BJ (cell line): ENCODE measurements at regions of chr17 and their contacts with region 1.

Region 1: DNA sequence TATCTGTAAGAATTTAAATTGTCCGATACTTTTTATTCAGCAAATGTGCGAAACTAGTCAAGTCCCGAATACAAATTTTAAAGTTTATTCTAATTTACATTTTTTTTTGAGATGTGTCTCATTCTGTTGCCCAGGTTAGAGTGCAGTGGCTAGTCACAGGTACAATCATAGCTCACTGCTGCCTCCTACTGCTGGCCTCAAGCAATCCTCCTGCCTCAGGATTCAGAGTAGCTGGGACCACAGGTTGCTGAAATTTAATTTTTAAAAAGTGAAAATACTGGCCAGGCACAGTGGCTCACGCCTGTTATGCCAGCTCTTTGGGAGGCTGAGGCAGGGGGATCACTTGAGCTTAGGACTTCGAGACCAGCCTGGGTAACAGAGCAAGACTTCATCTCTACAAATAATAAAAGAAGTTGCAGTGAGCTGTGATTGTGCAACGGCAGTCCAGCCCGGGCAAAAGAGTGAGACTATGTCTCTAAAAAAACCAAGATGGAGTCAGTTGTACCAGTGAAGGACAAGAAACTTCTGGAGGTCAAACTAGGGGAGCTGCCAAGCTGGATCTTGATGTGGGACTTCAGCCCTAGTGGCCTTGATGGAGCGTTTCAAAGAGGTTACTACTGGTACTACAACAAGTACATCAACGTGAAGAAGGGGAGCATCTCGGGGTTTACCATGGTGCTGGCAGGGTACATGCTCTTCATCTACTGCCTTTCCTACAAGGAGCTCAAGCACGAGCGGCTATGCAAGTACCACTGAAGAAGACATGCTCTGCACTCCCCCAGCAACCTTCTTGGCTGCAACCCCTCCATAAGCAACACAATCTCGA is 5.6 kb downstream of the POLG2 start:
- DNase-seq: no peak
- H3K4me3 ChIP-seq: no peak overlapping the region
- H3K27me3 ChIP-seq: no peaks in the 10 kb centered on the region
- CTCF ChIP-seq: peak; percentile 76

Region 2: GRCh38 chr17:64306850-64307463 is 184.3 kb before region 1 on chr17:
- CTCF ChIA-PET with region 1: interaction called, 16 read pairs
- POLR2A ChIA-PET with region 1: no interaction called
- DNase-seq: no peak
- H3K4me3 ChIP-seq: no peak overlapping the region
- H3K27me3 ChIP-seq: 0 out of 2 replicates have a peak, but pooled peaks cover 1% of the 10 kb centered on the region
- CTCF ChIP-seq: peak; percentile 83

Region 3: DNA sequence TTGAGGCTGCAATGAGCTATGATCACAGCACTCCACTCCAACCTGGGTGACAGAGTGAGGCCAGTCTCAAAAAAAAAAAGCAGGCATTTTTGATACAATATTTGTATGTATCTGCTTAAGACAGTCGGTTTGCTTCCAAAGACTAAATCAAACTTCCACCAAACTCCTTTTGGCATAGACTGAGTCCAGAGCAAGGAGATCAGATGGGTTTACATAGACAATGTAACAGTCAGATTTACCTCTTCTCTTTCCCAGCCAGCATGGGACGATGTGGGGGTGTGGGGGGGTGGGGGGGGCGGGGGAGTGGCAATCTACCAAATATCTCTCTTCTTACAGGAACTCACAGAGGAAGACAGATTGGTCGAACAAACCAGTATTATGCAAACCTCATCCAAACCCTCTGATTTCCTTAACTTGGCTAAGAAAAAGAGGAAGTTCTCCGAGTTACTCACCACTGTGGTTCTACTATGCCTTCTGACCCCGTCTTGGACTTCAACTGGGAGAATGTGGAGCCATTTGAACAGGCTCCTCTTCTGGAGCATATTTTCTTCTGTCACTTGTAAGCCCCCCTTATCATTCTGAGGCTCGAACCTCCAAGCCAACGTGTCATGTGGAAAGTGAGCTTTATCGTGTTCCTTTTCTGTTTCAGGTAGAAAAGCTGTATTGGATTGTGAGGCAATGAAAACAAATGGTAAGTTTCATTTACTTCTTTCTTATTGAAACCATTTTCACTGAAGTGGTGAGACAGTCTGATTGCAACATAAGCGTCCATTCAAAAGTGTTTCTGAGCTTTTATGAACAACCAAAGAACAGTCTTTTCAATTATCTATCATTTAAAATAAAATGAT is 42.4 kb before region 1 on chr17 and contains the start of gene MILR1:
- CTCF ChIA-PET with region 1: no interaction called
- POLR2A ChIA-PET with region 1: no interaction called
- DNase-seq: peak; percentile 23
- H3K4me3 ChIP-seq: no peak within 1 kb of the TSS
- H3K27me3 ChIP-seq: no peaks in the 10 kb centered on the region
- CTCF ChIP-seq: no peak
- polyA plus RNA-seq, gene MILR1: 0.75 and 1.8 TPM in 2 replicates

Region 4: DNA sequence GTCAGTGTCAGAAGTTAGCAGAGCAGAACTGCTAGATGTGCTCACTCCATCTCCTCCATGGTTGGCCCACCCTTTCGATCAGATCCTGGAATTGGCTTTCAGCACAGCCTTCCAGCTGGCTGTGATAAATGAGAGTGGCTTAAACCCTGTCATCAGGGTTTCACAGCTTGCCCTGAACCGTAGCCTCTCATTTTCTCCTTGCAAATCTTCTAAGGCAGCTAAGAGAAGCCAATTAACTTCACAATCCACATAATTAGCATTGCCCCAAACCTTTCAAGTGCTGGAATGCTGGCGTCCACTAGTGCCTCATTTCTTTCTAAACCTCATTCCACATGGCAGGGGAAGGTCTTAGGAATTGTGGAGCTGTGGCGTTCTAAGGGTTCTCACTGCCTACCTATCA is 20.6 kb before region 1 on chr17:
- CTCF ChIA-PET with region 1: interaction called, 13 read pairs
- POLR2A ChIA-PET with region 1: no interaction called
- DNase-seq: no peak
- H3K4me3 ChIP-seq: no peak overlapping the region
- H3K27me3 ChIP-seq: no peaks in the 10 kb centered on the region
- CTCF ChIP-seq: no peak

Region 5: DNA sequence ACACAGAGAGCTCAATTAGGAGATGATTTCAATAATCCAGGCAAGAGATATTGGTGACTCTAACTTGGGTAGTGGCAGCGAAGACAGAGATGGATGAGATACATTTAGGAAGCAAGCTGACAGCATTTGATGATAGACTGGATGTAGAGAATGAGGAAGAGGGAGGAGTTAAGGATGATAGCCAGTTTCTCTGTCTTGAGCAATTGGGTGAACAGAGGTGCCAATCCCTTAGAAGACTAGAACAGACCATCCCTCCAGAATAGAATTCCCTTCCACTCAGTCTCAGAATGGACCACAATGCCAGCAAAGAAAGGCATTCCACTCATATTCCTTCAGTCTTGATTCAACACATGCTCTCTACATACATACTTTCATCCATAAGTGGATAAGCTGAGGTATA is 11.6 kb before region 1 on chr17:
- CTCF ChIA-PET with region 1: interaction called, 19 read pairs
- POLR2A ChIA-PET with region 1: no interaction called
- DNase-seq: no peak
- H3K4me3 ChIP-seq: no peak overlapping the region
- H3K27me3 ChIP-seq: no peaks in the 10 kb centered on the region
- CTCF ChIP-seq: no peak

Region 6: GRCh38 chr17:64506576-64507477 is 15.6 kb after region 1 on chr17 and contains the start of gene CEP95:
- CTCF ChIA-PET with region 1: interaction called, 33 read pairs
- POLR2A ChIA-PET with region 1: interaction called, 5 read pairs
- DNase-seq: peak; percentile 80
- H3K4me3 ChIP-seq: peak within 1 kb of the TSS; percentile 99
- H3K27me3 ChIP-seq: no peaks in the 10 kb centered on the region
- CTCF ChIP-seq: no peak
- polyA plus RNA-seq, gene CEP95: 17.6 and 26.3 TPM in 2 replicates